ENCODE measurements at regions of chr16 and their contacts with region 1.

Region 1: DNA sequence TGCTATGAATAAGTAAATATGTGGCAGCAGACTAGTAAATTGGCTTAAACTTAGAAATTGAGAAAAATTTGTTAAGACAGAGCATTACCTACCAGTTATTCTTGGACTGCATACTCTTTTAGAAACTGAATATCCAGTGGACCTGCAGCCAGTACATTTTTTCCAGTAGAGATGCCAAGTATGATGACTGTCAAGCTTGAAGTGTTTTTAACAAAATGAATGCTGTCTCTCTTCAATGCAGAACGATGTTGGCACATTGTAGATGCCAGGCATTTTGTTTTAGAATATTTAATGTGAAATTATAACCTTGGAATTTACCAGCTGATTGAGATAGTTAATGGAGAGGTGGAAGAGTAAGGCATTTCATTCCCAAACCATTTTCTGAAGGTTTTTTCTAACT is 52.5 kb downstream of the NFAT5 start:
- DNase-seq: no peak
- ATAC-seq: no peak
- H3K4me3 ChIP-seq: no peak overlapping the region
- H3K4me3 Mint-ChIP-seq: no peak overlapping the region
- H3K27ac ChIP-seq: no peak overlapping the region
- H3K27ac Mint-ChIP-seq: no peak overlapping the region
- H3K4me1 ChIP-seq: no peaks in the 10 kb centered on the region
- H3K4me1 Mint-ChIP-seq: peaks cover 38 to 45% (median 43%) of the 10 kb centered on the region in 3 donors
- H3K27me3 ChIP-seq: no peaks in the 10 kb centered on the region
- H3K27me3 Mint-ChIP-seq: no peaks in the 10 kb centered on the region

Region 2: DNA sequence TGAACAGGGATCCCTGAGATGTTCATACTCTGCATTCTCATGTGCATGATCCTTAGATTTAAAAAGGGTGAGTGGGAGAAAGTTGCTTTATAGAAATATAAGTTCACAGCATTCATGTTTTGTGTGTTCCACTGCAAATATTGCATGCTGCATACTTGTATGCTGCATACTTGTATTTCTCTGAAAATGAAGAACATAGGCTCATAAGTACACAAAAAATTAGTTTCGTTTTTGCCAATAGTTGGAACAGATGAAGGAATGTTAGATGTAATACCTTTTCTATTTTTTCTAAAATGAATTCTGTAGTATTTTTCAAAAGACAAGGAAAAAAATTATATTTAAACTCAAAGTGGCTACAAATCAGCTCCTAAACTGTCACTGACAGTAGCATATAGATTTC is 26.5 kb after region 1 on chr16:
- CTCF ChIA-PET with region 1: no interaction called
- POLR2A ChIA-PET with region 1: interaction called in 1 of 2 experiments, 15 read pairs
- DNase-seq: no peak
- ATAC-seq: no peak
- H3K4me3 ChIP-seq: no peak overlapping the region
- H3K4me3 Mint-ChIP-seq: no peak overlapping the region
- H3K27ac ChIP-seq: no peak overlapping the region
- H3K27ac Mint-ChIP-seq: no peak overlapping the region
- H3K4me1 ChIP-seq: no peaks in the 10 kb centered on the region
- H3K4me1 Mint-ChIP-seq: peaks cover 4 to 7% (median 5%) of the 10 kb centered on the region in 3 donors
- H3K27me3 ChIP-seq: no peaks in the 10 kb centered on the region
- H3K27me3 Mint-ChIP-seq: no peaks in the 10 kb centered on the region